Caco-2 (cell line): ENCODE measurements at regions of chr7 and their contacts with region 1.

Region 1: GRCh38 chr7:113289140-113289740 is 170.9 kb upstream of the SMIM30 start:
- DNase-seq: peak; percentile 33 to 45
- H3K4me3 ChIP-seq: no peak overlapping the region
- H3K4me3 Mint-ChIP-seq: no peak overlapping the region
- H3K27ac Mint-ChIP-seq: no peak overlapping the region
- H3K4me1 ChIP-seq: no peaks in the 10 kb centered on the region
- H3K4me1 Mint-ChIP-seq: no peaks in the 10 kb centered on the region
- H3K27me3 ChIP-seq: no peaks in the 10 kb centered on the region
- H3K27me3 Mint-ChIP-seq: peaks cover 3% of the 10 kb centered on the region
- CTCF ChIP-seq: peak; percentile 31 to 66

Region 2: DNA sequence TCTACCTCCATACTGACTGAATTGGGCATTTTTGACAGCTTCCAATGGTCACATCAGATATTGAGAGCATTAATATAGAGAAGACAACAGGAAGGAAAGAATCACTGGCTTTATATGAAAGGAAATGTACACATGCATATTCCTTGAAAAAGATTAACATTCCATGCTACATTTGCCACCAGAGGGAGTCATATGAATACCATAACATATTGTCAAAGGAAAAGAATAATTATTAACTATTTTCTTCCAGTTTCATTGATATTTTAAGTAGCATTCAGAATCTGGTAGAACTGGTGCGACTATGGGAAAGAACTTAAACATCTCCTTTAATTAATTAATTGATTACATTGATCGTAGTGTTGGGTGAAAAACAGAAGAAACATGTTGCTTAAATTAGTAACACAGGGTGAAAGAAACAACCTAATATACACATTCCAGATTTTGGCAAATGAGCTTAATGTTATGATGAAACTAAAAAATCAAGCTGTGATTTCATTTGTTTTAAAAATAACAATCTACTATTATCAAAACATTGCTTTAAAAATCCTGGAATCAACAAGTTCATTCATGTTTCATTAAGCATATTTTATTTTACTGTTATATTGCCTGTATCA is 274.1 kb before region 1 on chr7:
- CTCF ChIA-PET with region 1: interaction called, 5 read pairs
- POLR2A ChIA-PET with region 1: no interaction called
- intact Hi-C with region 1: loop called (anchors 1 kb)
- DNase-seq: peak in 1 of 2 experiments; percentile 26
- H3K4me3 ChIP-seq: no peak overlapping the region
- H3K4me3 Mint-ChIP-seq: no peak overlapping the region
- H3K27ac Mint-ChIP-seq: no peak overlapping the region
- H3K4me1 ChIP-seq: no peaks in the 10 kb centered on the region
- H3K4me1 Mint-ChIP-seq: no peaks in the 10 kb centered on the region
- H3K27me3 ChIP-seq: no peaks in the 10 kb centered on the region
- H3K27me3 Mint-ChIP-seq: peaks cover 3% of the 10 kb centered on the region
- CTCF ChIP-seq: peak; percentile 38 to 42

Region 3: GRCh38 chr7:113159746-113160339 is 129.4 kb before region 1 on chr7:
- CTCF ChIA-PET with region 1: interaction called, 40 read pairs
- POLR2A ChIA-PET with region 1: no interaction called
- intact Hi-C with region 1: loop called (anchors 1 kb)
- DNase-seq: peak; percentile 44 to 46
- H3K4me3 ChIP-seq: no peak overlapping the region
- H3K4me3 Mint-ChIP-seq: no peak overlapping the region
- H3K27ac Mint-ChIP-seq: no peak overlapping the region
- H3K4me1 ChIP-seq: no peaks in the 10 kb centered on the region
- H3K4me1 Mint-ChIP-seq: no peaks in the 10 kb centered on the region
- H3K27me3 ChIP-seq: no peaks in the 10 kb centered on the region
- H3K27me3 Mint-ChIP-seq: peaks cover 2% of the 10 kb centered on the region
- CTCF ChIP-seq: peak; percentile 76 to 80

Region 4: GRCh38 chr7:113197274-113197673 is 92.0 kb before region 1 on chr7:
- CTCF ChIA-PET with region 1: no interaction called
- POLR2A ChIA-PET with region 1: no interaction called
- intact Hi-C with region 1: no loop called
- DNase-seq: no peak
- H3K4me3 ChIP-seq: no peak overlapping the region
- H3K4me3 Mint-ChIP-seq: no peak overlapping the region
- H3K27ac Mint-ChIP-seq: no peak overlapping the region
- H3K4me1 ChIP-seq: no peaks in the 10 kb centered on the region
- H3K4me1 Mint-ChIP-seq: no peaks in the 10 kb centered on the region
- H3K27me3 ChIP-seq: no peaks in the 10 kb centered on the region
- H3K27me3 Mint-ChIP-seq: peaks cover 3% of the 10 kb centered on the region
- CTCF ChIP-seq: no peak